ENCODE measurements at regions of chr13 and their contacts with region 1.

Region 1: GRCh38 chr13:50801087-50801931 is 42.2 kb downstream of the DLEU7 start:
- DNase-seq: peak; percentile 91
- ATAC-seq: peak; percentile 82
- H3K4me3 ChIP-seq: peak overlapping the region in 2 of 5 experiments; percentile 31 to 47
- H3K4me3 Mint-ChIP-seq: peak overlapping the region; percentile 73
- H3K27ac ChIP-seq: peak overlapping the region; percentile 78 to 88
- H3K27ac Mint-ChIP-seq: peak overlapping the region; percentile 91
- H3K4me1 ChIP-seq: peaks cover 46 to 47% of the 10 kb centered on the region in 2 donors
- H3K4me1 Mint-ChIP-seq: peaks cover 44% of the 10 kb centered on the region
- H3K27me3 ChIP-seq: no peaks in the 10 kb centered on the region
- H3K27me3 Mint-ChIP-seq: no peaks in the 10 kb centered on the region
- CTCF ChIP-seq: peak; percentile 85

Region 2: GRCh38 chr13:49976314-49977258 is 824.7 kb before region 1 on chr13:
- CTCF ChIA-PET with region 1: interaction called, 68 read pairs
- POLR2A ChIA-PET with region 1: no interaction called
- intact Hi-C with region 1: loop called (anchors 1 kb)
- DNase-seq: peak; percentile 86
- ATAC-seq: peak; percentile 78
- H3K4me3 ChIP-seq: no peak overlapping the region
- H3K4me3 Mint-ChIP-seq: no peak overlapping the region
- H3K27ac ChIP-seq: no peak overlapping the region
- H3K27ac Mint-ChIP-seq: no peak overlapping the region
- H3K4me1 ChIP-seq: peaks cover 0 to 4% of the 10 kb centered on the region in 2 donors
- H3K4me1 Mint-ChIP-seq: peaks cover 4% of the 10 kb centered on the region
- H3K27me3 ChIP-seq: no peaks in the 10 kb centered on the region
- H3K27me3 Mint-ChIP-seq: no peaks in the 10 kb centered on the region
- CTCF ChIP-seq: peak; percentile 98

Region 3: GRCh38 chr13:50123862-50124536 is 677.3 kb before region 1 on chr13:
- CTCF ChIA-PET with region 1: interaction called, 25 read pairs
- POLR2A ChIA-PET with region 1: interaction called, 19 read pairs
- intact Hi-C with region 1: loop called (anchors 1 kb)
- DNase-seq: peak; percentile 84
- ATAC-seq: peak; percentile 62
- H3K4me3 ChIP-seq: peak overlapping the region; percentile 77 to 98 (median 98)
- H3K4me3 Mint-ChIP-seq: peak overlapping the region; percentile 92
- H3K27ac ChIP-seq: peak overlapping the region; percentile 73 to 98
- H3K27ac Mint-ChIP-seq: peak overlapping the region; percentile 96
- H3K4me1 ChIP-seq: peaks cover 50 to 54% of the 10 kb centered on the region in 2 donors
- H3K4me1 Mint-ChIP-seq: peaks cover 64% of the 10 kb centered on the region
- H3K27me3 ChIP-seq: peaks cover 0 to 12% (median 6%) of the 10 kb centered on the region in 4 experiments
- H3K27me3 Mint-ChIP-seq: peaks cover 7% of the 10 kb centered on the region
- CTCF ChIP-seq: no peak

Region 4: DNA sequence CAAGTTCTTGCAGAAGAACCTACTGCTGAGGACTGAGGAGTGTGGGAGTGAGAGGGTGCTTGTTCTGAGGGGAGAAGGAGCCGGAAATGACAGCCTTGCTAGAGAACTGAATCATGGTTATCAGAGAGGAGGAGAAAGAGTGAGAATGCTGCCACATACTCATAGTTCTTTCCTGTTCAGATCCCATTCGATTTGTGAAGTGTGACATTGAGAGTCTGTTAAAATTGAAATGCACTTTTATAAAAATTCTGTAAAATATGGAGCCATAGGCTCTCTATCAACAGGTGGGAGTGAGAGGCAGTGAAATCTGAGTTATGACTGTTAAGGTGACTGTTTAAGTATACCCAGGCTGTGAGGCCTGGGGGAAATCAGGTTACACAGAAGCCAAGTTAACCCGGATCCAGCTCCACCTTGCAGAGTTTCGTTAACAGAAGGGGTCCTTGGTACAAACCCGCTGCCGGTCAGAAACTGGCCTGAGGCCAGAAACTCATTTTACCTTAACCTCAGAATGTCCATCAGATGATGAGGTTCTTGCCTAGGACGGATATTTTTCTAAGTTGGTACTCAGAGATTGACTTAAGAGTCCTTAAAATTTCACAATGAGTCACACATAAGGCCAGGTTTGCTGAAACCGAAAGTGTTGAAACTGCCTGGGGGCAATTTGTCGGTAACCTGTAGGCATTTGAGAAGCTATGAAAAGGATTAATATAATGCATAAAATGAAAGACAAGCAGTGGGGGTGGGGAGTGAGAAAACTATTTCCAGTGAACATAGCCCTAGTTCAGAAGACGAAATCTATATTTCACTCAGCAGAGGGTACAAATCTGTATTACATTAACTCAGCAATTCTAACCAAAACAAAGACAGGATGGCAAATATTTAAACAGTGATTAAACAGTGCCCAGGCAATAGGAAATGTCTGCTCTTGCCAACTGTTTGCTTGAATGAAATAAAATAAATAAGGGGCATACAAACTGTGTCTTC is 435.6 kb before region 1 on chr13:
- CTCF ChIA-PET with region 1: interaction called, 3 read pairs
- POLR2A ChIA-PET with region 1: no interaction called
- intact Hi-C with region 1: loop called (anchors 5 kb)
- DNase-seq: peak; percentile 47
- ATAC-seq: peak; percentile 43
- H3K4me3 ChIP-seq: peak overlapping the region in 3 of 5 experiments; percentile 6 to 35 (median 17)
- H3K4me3 Mint-ChIP-seq: peak overlapping the region; percentile 76
- H3K27ac ChIP-seq: peak overlapping the region in 1 of 2 donors; percentile 6
- H3K27ac Mint-ChIP-seq: peak overlapping the region; percentile 76
- H3K4me1 ChIP-seq: peaks cover 16 to 37% of the 10 kb centered on the region in 2 donors
- H3K4me1 Mint-ChIP-seq: peaks cover 45% of the 10 kb centered on the region
- H3K27me3 ChIP-seq: no peaks in the 10 kb centered on the region
- H3K27me3 Mint-ChIP-seq: no peaks in the 10 kb centered on the region
- CTCF ChIP-seq: no peak

Region 5: DNA sequence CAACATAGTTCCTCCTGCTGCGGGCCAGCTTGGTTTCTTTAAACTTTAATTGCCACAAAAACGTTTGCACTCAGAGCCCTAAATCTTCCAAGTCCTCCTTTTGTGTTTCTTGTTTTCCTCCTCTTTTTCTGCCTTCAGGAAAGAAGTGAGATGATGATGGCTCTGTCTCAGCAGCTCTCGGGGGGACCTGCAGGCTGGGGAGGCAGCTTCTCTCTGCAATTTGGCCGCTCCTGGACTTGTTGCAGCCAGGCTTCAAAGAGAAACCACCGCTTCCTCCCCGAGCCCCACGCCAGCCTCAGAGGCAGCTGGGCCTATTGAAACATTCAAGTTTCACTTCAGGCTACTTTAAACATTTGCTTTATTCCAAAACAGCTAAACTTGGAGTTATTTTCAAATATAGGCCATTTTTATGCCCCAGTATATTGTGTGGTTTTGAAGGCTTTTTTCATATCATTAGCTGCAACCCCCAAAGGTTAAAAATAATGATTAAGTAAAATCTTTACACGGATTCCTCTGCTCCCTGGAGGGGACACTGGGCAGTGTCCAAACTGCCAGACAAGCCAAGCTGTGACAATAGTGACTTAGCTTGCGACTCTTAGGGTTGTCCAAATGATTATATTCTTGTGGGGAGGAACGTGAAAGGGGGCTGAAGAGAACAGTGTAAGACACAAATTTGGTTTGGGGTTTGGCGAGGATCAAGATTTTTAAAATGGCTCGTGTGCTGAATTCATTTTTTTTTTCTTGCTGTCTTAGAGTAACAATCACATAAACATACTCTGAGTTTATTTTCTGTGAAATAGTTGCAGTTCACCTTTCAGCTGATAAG is 288.6 kb before region 1 on chr13:
- CTCF ChIA-PET with region 1: interaction called, 4 read pairs
- POLR2A ChIA-PET with region 1: interaction called, 4 read pairs
- intact Hi-C with region 1: loop called (anchors 1 kb)
- DNase-seq: peak; percentile 72
- ATAC-seq: peak; percentile 84
- H3K4me3 ChIP-seq: peak overlapping the region; percentile 25 to 71 (median 47)
- H3K4me3 Mint-ChIP-seq: no peak overlapping the region
- H3K27ac ChIP-seq: peak overlapping the region; percentile 76 to 92
- H3K27ac Mint-ChIP-seq: no peak overlapping the region
- H3K4me1 ChIP-seq: peaks cover 22 to 32% of the 10 kb centered on the region in 2 donors
- H3K4me1 Mint-ChIP-seq: no peaks in the 10 kb centered on the region
- H3K27me3 ChIP-seq: no peaks in the 10 kb centered on the region
- H3K27me3 Mint-ChIP-seq: no peaks in the 10 kb centered on the region
- CTCF ChIP-seq: no peak

Region 6: DNA sequence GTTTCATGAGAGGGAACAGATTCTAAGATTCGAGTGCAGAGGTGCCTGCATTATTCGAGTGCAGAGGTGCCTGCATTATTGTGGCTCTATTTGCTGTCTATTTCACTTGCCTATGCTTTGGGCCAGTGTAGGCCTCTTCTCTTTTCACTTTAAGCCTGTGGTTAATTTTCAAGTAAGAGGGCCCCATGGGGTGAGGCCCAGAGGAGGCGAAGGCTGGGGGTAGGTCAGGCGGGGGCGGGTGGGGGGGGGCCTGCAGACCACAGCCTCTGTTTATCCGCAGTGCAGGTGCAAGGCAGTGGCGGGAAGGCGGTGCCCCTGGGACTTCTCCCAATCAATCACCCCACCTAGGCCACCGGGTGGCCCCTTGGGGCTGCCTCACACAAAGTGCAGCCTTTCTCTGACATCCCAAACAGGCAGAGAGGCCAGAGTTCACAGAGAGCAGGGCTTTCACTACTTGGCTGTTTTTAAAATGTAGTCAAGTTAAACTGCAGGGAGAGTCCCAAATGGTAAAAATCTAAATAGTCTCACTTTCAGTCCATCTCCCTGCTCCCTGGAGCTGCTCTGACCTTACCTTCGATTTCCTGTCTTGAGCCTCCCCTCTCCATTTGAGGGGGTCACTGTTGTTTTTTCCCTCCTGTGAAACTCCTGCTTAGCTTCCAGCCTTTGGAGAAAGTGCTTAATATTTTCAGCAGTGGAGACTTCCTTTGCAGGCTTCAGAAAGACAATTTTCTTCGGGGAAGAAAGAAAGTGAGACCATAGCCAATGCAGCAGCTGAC is 206.8 kb before region 1 on chr13:
- CTCF ChIA-PET with region 1: interaction called, 21 read pairs
- POLR2A ChIA-PET with region 1: interaction called, 6 read pairs
- intact Hi-C with region 1: loop called (anchors 1 kb)
- DNase-seq: peak; percentile 83
- ATAC-seq: peak; percentile 89
- H3K4me3 ChIP-seq: peak overlapping the region in 2 of 5 experiments; percentile 10 to 35
- H3K4me3 Mint-ChIP-seq: peak overlapping the region; percentile 75
- H3K27ac ChIP-seq: peak overlapping the region; percentile 79 to 87
- H3K27ac Mint-ChIP-seq: peak overlapping the region; percentile 93
- H3K4me1 ChIP-seq: peaks cover 95 to 99% of the 10 kb centered on the region in 2 donors
- H3K4me1 Mint-ChIP-seq: peaks cover 85% of the 10 kb centered on the region
- H3K27me3 ChIP-seq: no peaks in the 10 kb centered on the region
- H3K27me3 Mint-ChIP-seq: no peaks in the 10 kb centered on the region
- CTCF ChIP-seq: no peak

Region 7: GRCh38 chr13:50760751-50761150 is 40.6 kb before region 1 on chr13:
- CTCF ChIA-PET with region 1: interaction called, 48 read pairs
- POLR2A ChIA-PET with region 1: no interaction called
- intact Hi-C with region 1: loop called (anchors 2 kb)
- DNase-seq: no peak
- ATAC-seq: no peak
- H3K4me3 ChIP-seq: no peak overlapping the region
- H3K4me3 Mint-ChIP-seq: no peak overlapping the region
- H3K27ac ChIP-seq: no peak overlapping the region
- H3K27ac Mint-ChIP-seq: no peak overlapping the region
- H3K4me1 ChIP-seq: peaks cover 48% of the 10 kb centered on the region in 2 donors
- H3K4me1 Mint-ChIP-seq: peaks cover 57% of the 10 kb centered on the region
- H3K27me3 ChIP-seq: no peaks in the 10 kb centered on the region
- H3K27me3 Mint-ChIP-seq: no peaks in the 10 kb centered on the region
- CTCF ChIP-seq: no peak

Measured in B cell (primary cell).